ENCODE measurements at regions of chr2 and their contacts with region 1.

Region 1: DNA sequence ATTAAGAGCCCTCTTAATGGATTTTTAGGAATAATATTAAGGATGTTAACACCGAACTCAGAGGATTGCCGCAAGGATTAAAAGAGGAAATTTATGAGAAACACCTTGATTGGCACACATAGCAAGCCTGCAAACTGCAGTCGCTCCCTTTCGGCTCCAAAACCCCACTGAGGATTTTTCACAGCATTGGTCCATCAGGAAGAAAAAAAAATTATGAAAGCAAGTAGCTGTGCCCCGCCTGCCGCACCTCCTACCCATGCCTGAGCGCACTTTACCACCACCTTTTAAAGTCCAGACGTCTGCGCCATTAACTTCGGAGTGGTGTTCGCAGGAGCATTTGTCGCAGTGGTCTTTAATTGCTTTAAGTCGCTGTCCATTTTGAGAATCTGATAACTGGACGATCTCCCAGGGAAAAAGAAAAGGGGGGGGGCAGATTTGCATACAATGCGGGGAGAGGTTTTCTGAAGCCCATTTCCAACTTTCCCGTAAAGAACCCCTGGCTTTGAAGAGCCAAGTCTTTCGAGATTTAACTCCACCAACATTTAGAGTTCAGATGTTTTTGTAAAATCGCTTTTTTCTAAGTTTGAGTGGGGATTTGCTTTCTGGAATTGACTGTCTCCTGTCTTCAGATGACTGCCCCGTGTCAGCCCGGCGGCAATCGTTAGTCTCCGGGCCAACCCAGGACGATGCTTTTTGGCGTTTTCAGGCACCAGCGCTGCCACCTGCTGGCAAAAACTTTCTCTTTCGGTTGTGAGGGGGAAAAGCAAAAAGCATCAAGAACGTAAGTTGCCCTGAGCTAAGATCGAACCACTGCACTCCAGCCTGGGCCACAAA is 914 bp upstream of the TRABD2A start:
- DNase-seq: peak; percentile 96
- H3K4me3 Mint-ChIP-seq: peak overlapping the region; percentile 94
- H3K27ac Mint-ChIP-seq: peak overlapping the region; percentile 96
- H3K4me1 Mint-ChIP-seq: peaks cover 54% of the 10 kb centered on the region
- H3K27me3 Mint-ChIP-seq: no peaks in the 10 kb centered on the region

Region 2: GRCh38 chr2:84302513-84303412 is 579.0 kb before region 1 on chr2:
- intact Hi-C with region 1: no loop called
- DNase-seq: peak; percentile 83
- H3K4me3 Mint-ChIP-seq: no peak overlapping the region
- H3K27ac Mint-ChIP-seq: no peak overlapping the region
- H3K4me1 Mint-ChIP-seq: no peaks in the 10 kb centered on the region
- H3K27me3 Mint-ChIP-seq: no peaks in the 10 kb centered on the region

Region 3: DNA sequence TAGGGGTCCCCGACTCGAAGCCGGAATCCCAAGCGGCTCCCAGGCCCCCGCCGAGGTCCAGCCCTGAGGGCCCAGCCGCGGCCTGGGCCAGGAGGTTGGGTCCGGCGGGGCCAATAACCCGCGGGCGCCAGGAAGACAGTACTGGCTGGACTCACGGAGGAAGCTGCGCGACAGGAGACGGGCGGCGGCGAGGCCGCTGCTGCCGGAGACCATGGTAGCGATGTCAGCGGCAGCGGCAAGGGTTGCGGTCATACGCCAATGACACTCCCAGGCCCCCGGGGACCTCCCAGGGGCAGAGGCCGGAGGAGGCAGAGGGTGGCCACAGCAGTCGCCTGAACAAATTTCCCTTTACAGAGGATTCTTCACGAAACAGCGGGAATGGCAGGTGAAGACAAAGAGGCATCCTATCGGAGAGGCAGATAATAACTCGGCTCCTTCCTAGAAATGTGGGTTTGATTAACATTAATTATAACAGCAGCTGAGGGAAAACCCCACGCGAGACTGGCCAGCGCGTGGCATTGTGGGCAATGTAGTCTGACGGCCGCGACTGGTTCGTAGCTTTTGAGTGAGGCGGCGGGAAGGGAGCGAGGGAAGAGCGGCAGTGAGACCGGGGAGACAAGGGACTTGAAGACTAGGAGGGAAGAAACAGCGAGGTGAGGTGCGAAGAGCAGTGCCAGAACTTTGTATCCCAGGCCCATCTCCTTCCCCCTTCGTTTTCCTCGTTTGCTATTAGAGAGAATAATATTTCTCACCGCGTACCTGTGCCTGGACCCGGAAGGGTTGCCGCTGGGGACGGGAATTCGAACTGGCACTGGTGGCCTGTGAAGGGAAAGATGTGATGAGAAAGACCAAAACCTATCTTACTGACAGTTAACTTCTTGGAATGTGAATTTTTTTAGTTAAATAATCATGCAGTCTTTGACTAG is 422.5 kb before region 1 on chr2 and contains the start of gene SUCLG1:
- intact Hi-C with region 1: loop called (anchors 1 kb)
- DNase-seq: peak; percentile 96
- H3K4me3 Mint-ChIP-seq: peak within 1 kb of the TSS; percentile 94
- H3K27ac Mint-ChIP-seq: peak within 1 kb of the TSS; percentile 97
- H3K4me1 Mint-ChIP-seq: peaks cover 33% of the 10 kb centered on the region
- H3K27me3 Mint-ChIP-seq: no peaks in the 10 kb centered on the region
- total RNA-seq, gene SUCLG1: 71.9 and 72.6 TPM in 2 replicates

Region 4: GRCh38 chr2:84516234-84516986 is 365.4 kb before region 1 on chr2 and contains the start of gene DNAH6:
- intact Hi-C with region 1: loop called (anchors 5 kb)
- DNase-seq: peak; percentile 96
- H3K4me3 Mint-ChIP-seq: peak within 1 kb of the TSS; percentile 88
- H3K27ac Mint-ChIP-seq: peak within 1 kb of the TSS; percentile 47
- H3K4me1 Mint-ChIP-seq: peaks cover 11% of the 10 kb centered on the region
- H3K27me3 Mint-ChIP-seq: peaks cover 27% of the 10 kb centered on the region
- total RNA-seq, gene DNAH6: 0.17 and 0.23 TPM in 2 replicates

Region 5: DNA sequence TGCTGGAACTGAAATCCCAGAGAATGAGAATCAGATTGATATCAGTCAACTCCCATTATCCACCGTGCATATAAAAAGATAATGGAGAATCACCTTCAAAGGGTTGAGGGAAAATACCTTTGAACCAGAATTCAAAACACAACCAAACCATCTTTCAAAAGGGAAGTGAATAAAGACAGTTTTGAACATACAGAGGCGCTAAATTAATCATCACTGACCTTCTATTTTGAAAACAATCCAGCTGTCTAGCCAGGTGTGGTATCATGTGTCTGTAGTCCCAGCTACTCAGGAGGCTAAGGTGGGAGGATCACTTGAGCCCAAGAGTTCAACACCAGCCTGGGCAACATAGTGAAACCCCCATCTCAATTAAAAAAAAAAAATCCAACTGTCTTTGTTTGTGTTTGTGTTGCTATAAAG is 64.6 kb before region 1 on chr2:
- intact Hi-C with region 1: loop called (anchors 2 kb)
- DNase-seq: no peak
- H3K4me3 Mint-ChIP-seq: peak overlapping the region; percentile 9
- H3K27ac Mint-ChIP-seq: peak overlapping the region; percentile 56
- H3K4me1 Mint-ChIP-seq: peaks cover 32% of the 10 kb centered on the region
- H3K27me3 Mint-ChIP-seq: no peaks in the 10 kb centered on the region

Region 6: DNA sequence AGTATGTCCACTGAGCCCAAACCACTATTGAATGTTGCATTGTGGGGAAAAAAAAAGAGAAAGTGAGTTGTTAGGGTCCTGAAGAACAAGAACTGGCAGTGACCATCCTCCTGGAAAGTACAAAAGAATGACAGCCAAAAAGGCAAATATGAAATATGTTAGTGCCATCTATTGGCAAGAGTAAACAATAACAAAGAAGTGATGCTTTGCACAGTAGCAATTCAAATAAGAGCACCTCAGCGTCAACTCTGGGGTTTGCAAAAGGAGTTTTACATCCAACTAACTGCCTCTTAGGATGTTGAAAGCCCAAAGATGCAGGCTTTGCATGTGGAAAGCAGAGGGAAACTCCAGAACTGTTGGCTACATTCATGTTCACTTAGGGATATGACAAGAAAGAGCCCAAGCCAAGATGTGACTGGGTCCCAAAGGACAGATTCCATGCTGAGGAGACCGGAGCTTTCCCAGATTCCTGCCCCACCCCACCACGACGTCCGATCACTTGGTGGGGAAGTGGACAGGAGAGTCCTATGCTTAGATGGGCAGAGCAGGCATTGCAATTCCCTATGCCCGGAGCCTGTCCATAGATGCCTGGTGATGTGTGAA is 16.5 kb before region 1 on chr2:
- intact Hi-C with region 1: loop called (anchors 2 kb)
- DNase-seq: peak; percentile 72
- H3K4me3 Mint-ChIP-seq: no peak overlapping the region
- H3K27ac Mint-ChIP-seq: peak overlapping the region; percentile 45
- H3K4me1 Mint-ChIP-seq: peaks cover 55% of the 10 kb centered on the region
- H3K27me3 Mint-ChIP-seq: no peaks in the 10 kb centered on the region

Region 7: DNA sequence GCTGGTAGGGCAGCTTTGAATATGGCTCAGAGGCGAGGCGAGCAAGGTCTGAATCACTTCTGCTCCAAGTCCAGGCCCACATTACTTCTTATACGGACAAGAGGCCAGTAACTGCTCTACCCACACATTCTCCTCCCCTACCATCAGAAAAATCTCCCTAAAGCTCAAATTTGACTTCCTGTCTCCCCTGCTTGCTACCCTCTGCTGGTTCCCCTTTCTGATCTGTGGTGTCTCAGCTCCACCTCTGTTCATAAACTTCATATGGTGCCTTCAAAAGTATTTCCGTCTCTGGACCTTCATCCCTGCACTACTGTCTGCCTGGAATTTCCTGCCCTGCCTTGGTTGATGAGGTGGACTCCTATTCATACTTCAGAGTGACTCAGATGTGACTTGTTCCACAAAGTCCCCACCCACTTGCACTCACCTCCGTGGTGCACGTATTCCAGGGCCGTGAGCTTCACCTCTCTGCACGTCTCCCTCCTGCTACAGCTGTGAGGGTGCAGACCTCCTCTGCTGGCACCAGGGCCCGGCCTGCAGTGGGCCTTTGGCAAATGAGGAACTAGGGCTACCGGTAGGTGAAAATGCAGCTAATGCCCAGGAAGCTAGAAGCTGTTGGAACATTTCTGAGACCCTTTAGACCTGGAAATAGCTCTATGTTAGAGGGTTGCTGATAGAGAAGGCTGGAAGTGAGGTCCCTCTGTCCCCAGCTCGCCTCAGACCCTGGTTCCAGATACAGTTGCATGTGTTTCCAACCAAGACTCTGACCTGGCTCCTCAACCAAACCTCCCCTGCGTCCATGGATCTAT is 64.6 kb after region 1 on chr2:
- intact Hi-C with region 1: loop called (anchors 1 kb)
- DNase-seq: peak; percentile 89
- H3K4me3 Mint-ChIP-seq: peak overlapping the region; percentile 50
- H3K27ac Mint-ChIP-seq: peak overlapping the region; percentile 89
- H3K4me1 Mint-ChIP-seq: peaks cover 45% of the 10 kb centered on the region
- H3K27me3 Mint-ChIP-seq: no peaks in the 10 kb centered on the region

Measured in activated CD4-positive, alpha-beta T cell treated with anti-CD3 and anti-CD28 coated beads, Interleukin-2, amount 10 ng/mL, durations not matched to agents 24 days and 14 days (primary cell).